Activated T-helper 2 cell treated with anti-CD3 and anti-CD28 coated beads, Interferon-gamma antibody, Interleukin-2, Interleukin-4, amounts not matched to agents 10 μg/mL and 5 μg/mL and 100 μg/mL, durations not matched to agents 14 hours and 24 hours and 36 hours (primary cell): ENCODE measurements at regions of chr2 and their contacts with region 1.

Region 1: GRCh38 chr2:224901121-224901676 is 141.1 kb downstream of the DOCK10 start:
- DNase-seq: no peak
- H3K4me3 Mint-ChIP-seq: no peak overlapping the region
- H3K27ac Mint-ChIP-seq: peak overlapping the region; percentile 57
- H3K4me1 Mint-ChIP-seq: peaks cover 38% of the 10 kb centered on the region
- H3K27me3 Mint-ChIP-seq: no peaks in the 10 kb centered on the region

Region 2: DNA sequence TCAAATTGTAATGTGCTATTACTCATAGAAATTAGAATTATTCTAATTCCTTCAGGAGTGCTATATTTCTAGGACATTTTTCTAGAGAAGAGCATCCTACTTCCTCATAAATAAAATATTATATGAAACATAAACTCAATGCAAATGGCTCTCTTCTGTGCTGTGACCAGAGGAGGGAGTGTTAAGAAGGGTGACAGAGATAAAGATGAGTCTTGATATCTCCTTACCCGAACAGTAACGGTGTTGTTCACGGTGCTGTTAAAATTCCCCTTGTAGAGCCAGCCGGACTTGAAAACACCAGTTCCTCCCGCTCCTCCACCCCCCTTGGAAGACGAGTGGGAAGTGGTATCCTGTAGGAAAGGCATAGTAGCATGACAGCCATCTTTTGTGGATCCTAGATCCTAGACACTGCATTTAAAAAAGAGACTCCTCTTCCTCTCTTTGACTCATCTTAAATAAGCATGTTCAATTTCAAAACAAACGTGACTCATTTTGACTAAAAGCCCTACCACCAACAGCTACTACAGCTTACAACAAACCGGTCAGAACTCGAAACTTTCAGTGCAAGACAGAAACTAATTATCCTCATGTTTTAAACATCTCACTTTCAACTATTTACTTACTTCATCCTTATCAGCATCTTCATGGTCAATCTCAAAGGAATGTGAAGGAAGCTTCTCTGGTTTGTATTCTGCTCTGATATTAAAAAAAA is 15.2 kb before region 1 on chr2:
- intact Hi-C with region 1: loop called (anchors 2 kb)
- DNase-seq: no peak
- H3K4me3 Mint-ChIP-seq: no peak overlapping the region
- H3K27ac Mint-ChIP-seq: peak overlapping the region; percentile 88
- H3K4me1 Mint-ChIP-seq: peaks cover 61% of the 10 kb centered on the region
- H3K27me3 Mint-ChIP-seq: no peaks in the 10 kb centered on the region

Region 3: DNA sequence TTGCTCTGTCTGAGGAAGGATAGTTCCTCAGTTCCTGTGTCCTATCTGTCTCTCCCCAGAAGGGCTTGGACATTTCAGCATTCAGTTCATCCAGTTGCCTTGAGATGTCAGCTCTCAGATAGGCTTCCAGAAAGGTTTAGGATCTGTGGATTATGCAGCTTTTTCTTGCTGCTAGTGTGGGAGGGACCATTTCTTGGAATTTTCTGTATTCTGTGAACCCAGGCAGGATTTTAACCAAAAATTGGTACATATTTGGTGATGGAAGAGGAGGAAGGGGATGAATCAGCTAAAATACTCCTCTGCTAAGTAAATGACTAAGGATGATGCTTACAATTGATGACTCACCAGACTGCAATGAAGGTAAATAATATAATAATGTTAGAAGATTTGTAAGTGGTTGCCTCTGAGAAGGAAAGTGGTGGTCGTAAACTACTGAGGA is 199.7 kb after region 1 on chr2:
- intact Hi-C with region 1: no loop called
- DNase-seq: no peak
- H3K4me3 Mint-ChIP-seq: no peak overlapping the region
- H3K27ac Mint-ChIP-seq: no peak overlapping the region
- H3K4me1 Mint-ChIP-seq: no peaks in the 10 kb centered on the region
- H3K27me3 Mint-ChIP-seq: peaks cover 6% of the 10 kb centered on the region